ENCODE measurements at regions of chr19 and their contacts with region 1.

Region 1: DNA sequence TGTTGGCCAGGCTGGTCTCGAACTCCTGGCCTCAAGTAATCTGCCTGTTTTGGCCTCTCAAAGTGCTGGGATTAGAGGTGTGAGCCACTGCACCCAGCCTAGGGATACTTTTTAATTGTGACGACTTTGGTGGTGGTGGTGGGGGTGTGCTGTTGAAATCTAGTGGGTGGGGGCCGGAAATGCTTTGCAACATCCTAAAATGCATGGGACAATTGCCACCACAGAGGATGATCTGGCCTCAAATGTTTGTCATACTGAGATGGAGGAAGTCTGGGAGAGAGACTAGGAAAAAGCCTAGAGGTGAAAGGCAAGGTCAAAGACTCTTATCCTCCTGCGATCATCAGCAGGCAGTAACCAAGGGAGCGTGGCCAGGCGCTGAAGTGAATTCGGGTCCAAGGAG is 1.4 kb downstream of the NWD1 start:
- DNase-seq: no peak
- ATAC-seq: no peak
- H3K4me3 Mint-ChIP-seq: no peak overlapping the region
- H3K27ac Mint-ChIP-seq: no peak overlapping the region
- H3K4me1 Mint-ChIP-seq: no peaks in the 10 kb centered on the region
- H3K27me3 Mint-ChIP-seq: peaks cover 3% of the 10 kb centered on the region

Region 2: DNA sequence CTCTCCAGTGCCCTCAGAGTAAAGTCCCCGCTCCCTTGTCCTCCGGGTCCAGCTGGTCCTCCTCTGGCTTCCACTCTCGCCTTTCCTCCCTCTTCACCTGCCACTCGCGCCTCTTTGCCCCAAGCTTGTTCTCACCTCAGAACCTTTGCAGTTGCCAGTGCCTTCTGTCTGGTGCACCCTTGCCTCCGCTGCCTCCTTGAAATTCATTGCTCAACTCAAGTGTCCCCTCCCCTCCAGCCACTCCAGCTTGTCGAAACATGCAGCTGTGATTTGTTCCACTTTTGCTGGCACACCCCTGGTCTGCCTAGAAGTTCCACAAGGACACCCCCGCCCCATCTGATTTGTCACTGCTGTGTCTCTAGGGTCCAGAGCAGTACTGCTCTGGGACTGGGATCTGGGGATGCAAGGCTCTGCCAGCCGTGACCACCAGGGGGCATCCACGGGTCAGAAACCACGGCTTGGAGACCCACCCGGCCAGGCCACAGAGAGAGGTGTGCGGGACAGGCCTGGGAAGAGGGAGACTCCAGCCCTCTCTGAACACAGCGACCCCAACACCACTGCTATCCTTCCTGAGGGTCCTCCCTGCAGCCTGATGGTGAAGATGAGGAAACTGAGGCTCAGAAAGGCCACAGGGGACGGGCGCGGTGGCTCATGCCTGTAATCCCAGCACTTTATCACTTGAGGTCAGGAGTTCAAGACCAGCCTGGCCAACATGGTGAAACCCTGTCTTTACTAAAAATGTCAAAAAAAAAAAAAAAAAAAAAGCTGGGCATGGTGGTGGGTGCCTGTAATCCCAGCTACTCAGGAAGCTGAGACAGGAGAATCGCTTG is 473.5 kb before region 1 on chr19:
- CTCF ChIA-PET with region 1: no interaction called
- POLR2A ChIA-PET with region 1: no interaction called
- intact Hi-C with region 1: no loop called
- DNase-seq: peak; percentile 91
- ATAC-seq: peak; percentile 96
- H3K4me3 Mint-ChIP-seq: no peak overlapping the region
- H3K27ac Mint-ChIP-seq: no peak overlapping the region
- H3K4me1 Mint-ChIP-seq: peaks cover 13% of the 10 kb centered on the region
- H3K27me3 Mint-ChIP-seq: no peaks in the 10 kb centered on the region

Region 3: DNA sequence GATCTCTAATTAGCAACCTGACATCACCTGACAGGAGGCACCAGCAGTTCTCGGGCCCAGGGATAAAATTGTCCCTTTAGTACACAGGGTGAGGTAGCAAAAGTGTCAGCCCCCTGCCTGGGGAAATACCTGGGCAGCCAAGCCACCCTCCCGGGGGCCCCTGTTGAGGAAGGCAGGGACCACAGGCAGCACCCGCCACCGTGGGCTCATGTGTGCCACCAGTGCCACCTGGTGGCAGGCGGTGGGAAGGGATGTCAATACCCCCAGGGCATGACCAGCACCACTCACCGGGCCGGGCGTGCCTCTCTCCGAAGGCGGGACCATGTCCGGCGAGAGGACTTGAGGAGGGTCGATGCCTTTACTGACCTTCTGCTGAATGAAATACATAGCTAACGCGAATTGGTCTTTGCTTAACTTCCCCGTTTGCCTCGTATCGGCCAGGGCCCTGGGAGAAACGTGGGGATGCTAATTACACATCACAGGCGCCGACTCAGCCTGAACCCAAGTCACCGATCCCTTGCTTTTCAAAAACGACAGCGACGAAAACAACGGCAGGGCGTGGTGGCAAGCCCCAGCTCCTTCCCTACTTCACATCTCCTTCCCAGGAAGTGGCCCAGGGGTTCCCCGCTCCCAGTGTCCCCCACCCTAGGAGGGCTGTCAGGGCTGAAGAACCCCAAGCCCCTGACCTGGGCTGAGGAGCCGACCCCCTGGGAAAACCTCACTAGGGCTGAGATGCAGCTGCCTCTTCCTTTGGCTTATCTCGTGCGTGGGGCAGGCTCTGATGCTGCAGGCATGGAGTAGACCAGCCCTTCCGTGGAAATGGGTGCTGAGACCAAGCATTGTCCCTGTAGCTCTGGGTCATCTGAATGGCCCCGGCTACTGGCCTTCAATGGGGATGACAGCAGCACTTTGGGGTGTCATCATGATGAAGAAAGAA is 303.1 kb before region 1 on chr19:
- CTCF ChIA-PET with region 1: no interaction called
- POLR2A ChIA-PET with region 1: no interaction called
- intact Hi-C with region 1: no loop called
- DNase-seq: peak; percentile 79
- ATAC-seq: peak; percentile 97
- H3K4me3 Mint-ChIP-seq: no peak overlapping the region
- H3K27ac Mint-ChIP-seq: no peak overlapping the region
- H3K4me1 Mint-ChIP-seq: peaks cover 4% of the 10 kb centered on the region
- H3K27me3 Mint-ChIP-seq: no peaks in the 10 kb centered on the region

Region 4: GRCh38 chr19:16528073-16528472 is 193.0 kb before region 1 on chr19:
- CTCF ChIA-PET with region 1: no interaction called
- POLR2A ChIA-PET with region 1: no interaction called
- intact Hi-C with region 1: loop called in 1 of 2 experiments (anchors 5 kb)
- DNase-seq: peak; percentile 72
- ATAC-seq: peak; percentile 77
- H3K4me3 Mint-ChIP-seq: no peak overlapping the region
- H3K27ac Mint-ChIP-seq: no peak overlapping the region
- H3K4me1 Mint-ChIP-seq: no peaks in the 10 kb centered on the region
- H3K27me3 Mint-ChIP-seq: no peaks in the 10 kb centered on the region